BJ (cell line): ENCODE measurements at regions of chr1 and their contacts with region 1.

Region 1: GRCh38 chr1:62082456-62083363 is 111.9 kb upstream of the L1TD1 start:
- DNase-seq: no peak
- H3K4me3 ChIP-seq: no peak overlapping the region
- H3K27me3 ChIP-seq: no peaks in the 10 kb centered on the region
- CTCF ChIP-seq: peak; percentile 95

Region 2: DNA sequence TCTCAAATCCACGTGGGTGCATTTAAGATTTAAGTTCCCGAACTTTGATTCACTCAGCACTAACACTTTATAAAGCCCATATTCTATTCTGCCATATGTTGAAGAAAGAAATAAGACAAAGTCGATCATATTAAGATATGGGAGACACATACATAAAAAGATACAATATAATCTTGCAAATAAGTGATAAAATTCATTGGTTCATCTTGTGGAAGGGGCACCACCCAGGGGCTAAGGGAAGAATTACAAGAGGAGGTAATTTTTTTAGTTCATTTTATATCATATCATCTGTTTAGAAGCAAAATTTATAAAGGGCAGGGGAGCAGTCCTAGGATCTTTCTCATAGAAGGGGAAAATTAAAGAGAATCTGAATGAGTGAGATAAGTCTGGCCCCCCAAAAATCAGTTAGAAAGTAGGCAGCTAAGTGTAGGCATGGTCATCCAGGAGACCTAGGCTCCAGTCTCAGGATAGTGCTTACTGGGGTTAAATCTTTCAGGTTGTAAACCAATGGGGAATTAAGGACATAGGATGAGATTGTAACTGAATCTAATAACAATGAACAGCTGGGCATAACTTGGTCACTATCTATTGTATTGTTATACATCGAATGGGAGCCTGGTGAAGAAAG is 12.2 kb before region 1 on chr1:
- CTCF ChIA-PET with region 1: interaction called, 19 read pairs
- POLR2A ChIA-PET with region 1: no interaction called
- DNase-seq: no peak
- H3K4me3 ChIP-seq: no peak overlapping the region
- H3K27me3 ChIP-seq: no peaks in the 10 kb centered on the region
- CTCF ChIP-seq: peak; percentile 59

Region 3: GRCh38 chr1:62093261-62093660 is 10.6 kb after region 1 on chr1:
- CTCF ChIA-PET with region 1: interaction called, 53 read pairs
- POLR2A ChIA-PET with region 1: no interaction called
- DNase-seq: no peak
- H3K4me3 ChIP-seq: no peak overlapping the region
- H3K27me3 ChIP-seq: no peaks in the 10 kb centered on the region
- CTCF ChIP-seq: no peak

Region 4: DNA sequence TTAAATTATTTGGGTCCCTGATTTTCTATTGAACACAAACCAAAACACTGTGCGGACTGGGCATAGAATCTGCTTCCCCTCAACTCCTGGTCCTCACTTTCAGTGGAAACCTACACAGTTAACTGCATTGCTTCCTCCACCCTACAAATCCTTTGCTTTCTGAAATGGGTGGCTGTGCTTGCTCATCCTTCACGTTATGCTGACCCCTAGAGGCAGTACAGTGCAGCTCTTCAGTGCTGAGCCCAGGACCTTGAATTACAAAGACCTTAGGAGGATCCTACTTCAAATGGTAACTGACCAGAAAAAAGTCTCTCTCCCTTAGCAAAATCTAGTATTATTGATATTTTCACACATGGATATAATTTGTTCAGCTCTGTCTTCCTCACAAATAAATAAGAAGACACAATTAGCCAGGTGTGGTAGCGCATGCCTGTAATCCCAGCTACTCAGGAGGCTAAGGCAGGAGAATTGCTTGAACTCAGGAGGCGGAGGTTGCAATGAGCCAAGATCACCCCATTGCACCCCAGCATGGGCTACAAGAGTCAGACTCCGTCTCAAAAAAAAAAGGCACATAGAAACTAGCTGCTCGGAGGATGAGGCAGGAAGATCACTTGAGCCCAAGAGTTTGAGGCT is 48.5 kb after region 1 on chr1:
- CTCF ChIA-PET with region 1: interaction called, 94 read pairs
- POLR2A ChIA-PET with region 1: no interaction called
- DNase-seq: no peak
- H3K4me3 ChIP-seq: no peak overlapping the region
- H3K27me3 ChIP-seq: no peaks in the 10 kb centered on the region
- CTCF ChIP-seq: peak; percentile 97

Region 5: DNA sequence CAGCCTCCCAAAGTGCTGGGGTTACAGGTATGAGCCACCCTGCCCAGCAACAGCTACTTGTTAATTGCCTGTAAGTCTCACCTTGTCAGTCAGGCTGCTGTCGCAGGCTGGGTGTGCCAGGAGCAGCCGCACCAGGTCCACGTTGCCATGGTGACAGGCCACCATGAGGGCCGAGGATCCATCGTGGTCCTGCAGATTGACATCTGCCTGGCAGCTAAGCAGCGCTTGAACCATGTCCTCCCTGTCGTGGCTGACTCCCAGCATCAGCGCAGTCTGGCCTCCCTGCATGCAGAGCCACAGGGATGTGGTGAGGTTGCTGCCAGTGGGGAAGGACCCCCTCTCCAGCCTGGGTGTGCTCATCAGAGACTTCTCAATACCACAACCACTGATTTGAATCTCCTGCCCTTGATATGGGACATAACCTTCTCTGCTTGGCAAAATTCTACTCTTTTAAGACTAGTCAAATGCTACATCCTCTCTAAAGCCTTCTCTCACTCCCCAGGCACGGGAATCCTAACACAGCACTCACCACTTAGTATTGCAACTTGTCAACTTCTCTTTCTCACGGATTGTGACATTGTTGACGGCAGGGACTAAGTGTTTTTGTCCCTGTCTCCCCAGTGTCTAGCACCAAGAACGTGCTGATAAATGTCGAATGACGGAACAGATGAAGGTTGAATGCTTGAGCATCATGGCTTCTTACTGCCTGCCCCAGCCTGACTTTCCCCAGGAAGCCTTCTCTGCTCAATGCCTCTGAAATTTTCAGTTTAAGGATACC is 164.9 kb after region 1 on chr1:
- CTCF ChIA-PET with region 1: no interaction called
- POLR2A ChIA-PET with region 1: no interaction called
- DNase-seq: no peak
- H3K4me3 ChIP-seq: no peak overlapping the region
- H3K27me3 ChIP-seq: no peaks in the 10 kb centered on the region
- CTCF ChIP-seq: no peak